Heart left ventricle (tissue), 16 donors: ENCODE measurements at regions of chr2 and their contacts with region 1.

Region 1: GRCh38 chr2:113198790-113199612 is 25.2 kb downstream of the PSD4 start:
- DNase-seq: peak; percentile 78 to 89 (median 82)
- ATAC-seq: peak; percentile 53 to 93 (median 88)
- H3K4me3 ChIP-seq: peak overlapping the region; percentile 60 to 97 (median 76)
- H3K27ac ChIP-seq: peak overlapping the region in 8 of 12 donors; percentile 9 to 58 (median 34)
- H3K4me1 ChIP-seq: peaks cover 0 to 13% (median 5%) of the 10 kb centered on the region in 12 donors
- H3K27me3 ChIP-seq: no peaks in the 10 kb centered on the region
- CTCF ChIP-seq: peak; percentile 88 to 100 (median 94)
- POLR2A ChIP-seq: no peak

Region 2: GRCh38 chr2:113240150-113240862 is 41.3 kb after region 1 on chr2:
- intact Hi-C with region 1: loop called in 4 of 10 experiments (anchors 2 to 5 kb)
- DNase-seq: peak; percentile 86 to 95 (median 90)
- ATAC-seq: peak; percentile 66 to 85 (median 79)
- H3K4me3 ChIP-seq: no peak overlapping the region
- H3K27ac ChIP-seq: peak overlapping the region in 11 of 12 donors; percentile 11 to 90 (median 63)
- H3K4me1 ChIP-seq: peaks cover 5 to 41% (median 23%) of the 10 kb centered on the region in 12 donors
- H3K27me3 ChIP-seq: no peaks in the 10 kb centered on the region
- CTCF ChIP-seq: no peak
- POLR2A ChIP-seq: no peak

Region 3: GRCh38 chr2:113351375-113352355 is 152.7 kb after region 1 on chr2:
- intact Hi-C with region 1: no loop called
- DNase-seq: no peak
- ATAC-seq: no peak
- H3K4me3 ChIP-seq: no peak overlapping the region
- H3K27ac ChIP-seq: no peak overlapping the region
- H3K4me1 ChIP-seq: no peaks in the 10 kb centered on the region
- H3K27me3 ChIP-seq: no peaks in the 10 kb centered on the region
- CTCF ChIP-seq: no peak
- POLR2A ChIP-seq: no peak